K562 (cell line): ENCODE measurements at regions of chr20 and their contacts with region 1.

Region 1: DNA sequence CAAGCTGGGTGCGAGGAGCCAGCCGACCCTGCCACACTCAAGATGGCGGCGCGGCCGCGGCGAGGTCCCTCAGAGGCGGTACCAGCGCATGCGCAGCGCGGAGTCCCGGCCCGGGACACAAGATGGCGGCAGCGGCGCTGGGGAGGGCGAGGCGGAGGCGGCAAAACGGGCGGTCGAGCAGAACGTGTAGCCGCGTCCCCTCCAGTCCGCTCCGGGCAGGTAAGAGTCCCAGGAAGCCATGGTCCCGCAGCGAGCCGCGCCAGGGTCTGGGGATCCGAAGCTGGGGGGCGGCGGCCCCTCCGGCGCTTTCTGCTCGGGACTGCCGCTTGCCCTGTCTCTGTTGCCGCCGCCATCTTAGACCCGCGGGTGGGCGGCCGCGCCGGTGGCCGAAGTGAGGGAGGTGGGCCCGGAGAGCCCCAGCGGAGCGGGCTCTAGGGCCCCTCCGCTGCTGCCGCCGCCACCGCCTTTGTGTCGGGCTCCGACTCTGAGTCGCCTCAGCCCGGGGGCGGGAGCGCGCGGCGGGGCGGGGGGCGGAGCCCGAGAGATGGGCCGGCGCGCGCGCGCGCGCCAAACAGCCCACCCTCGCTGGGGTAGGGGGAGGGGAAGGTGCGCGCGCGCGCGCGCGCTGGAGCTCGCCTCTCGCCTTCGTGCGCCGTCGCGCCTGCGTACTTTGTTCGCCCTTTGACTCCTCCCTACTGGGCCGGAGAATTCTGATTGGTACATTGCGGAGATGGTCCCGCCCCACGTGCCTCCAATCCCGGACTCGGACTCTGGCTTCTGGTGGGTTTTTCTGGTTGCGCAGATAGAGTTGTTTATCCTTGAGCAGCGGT is at the start of gene PCIF1:
- DNase-seq: peak; percentile 97 to 99 (median 98)
- ATAC-seq: peak; percentile 90
- H3K4me3 ChIP-seq: peak within 1 kb of the TSS; percentile 99
- H3K27ac ChIP-seq: peak within 1 kb of the TSS; percentile 100
- H3K4me1 ChIP-seq: peaks cover 12 to 28% of the 10 kb centered on the region in 2 experiments; a peak in 4 of 5 replicates
- H3K27me3 ChIP-seq: no peaks in the 10 kb centered on the region
- CTCF ChIP-seq: peak in 1 of 3 experiments; percentile 25; a peak in 1 of 6 replicates
- EP300 ChIP-seq: no peak
- POLR2A ChIP-seq: peak; percentile 99
- RAD21 ChIP-seq: no peak; a peak in 1 of 4 replicates
- polyA plus RNA-seq, gene PCIF1: 5.8 to 12.9 TPM

Region 2: GRCh38 chr20:45798935-45799642 is 135.7 kb before region 1 on chr20:
- CTCF ChIA-PET with region 1: no interaction called
- POLR2A ChIA-PET with region 1: interaction called, 4 read pairs
- in situ Hi-C with region 1: no loop called
- intact Hi-C with region 1: loop called (anchors 10 kb)
- DNase-seq: peak; percentile 45 to 81 (median 62)
- ATAC-seq: peak; percentile 98
- H3K4me3 ChIP-seq: no peak overlapping the region
- H3K27ac ChIP-seq: peak overlapping the region; percentile 47; the same call in 1 of the 3 replicates
- H3K4me1 ChIP-seq: peaks cover 0 to 6% of the 10 kb centered on the region in 2 experiments; a peak in 1 of 5 replicates
- H3K27me3 ChIP-seq: no peaks in the 10 kb centered on the region
- CTCF ChIP-seq: peak; percentile 79 to 88 (median 86)
- EP300 ChIP-seq: no peak
- POLR2A ChIP-seq: no peak
- RAD21 ChIP-seq: peak; percentile 81 to 89

Region 3: GRCh38 chr20:45910670-45911485 is 23.9 kb before region 1 on chr20:
- CTCF ChIA-PET with region 1: no interaction called
- POLR2A ChIA-PET with region 1: interaction called, 13 read pairs
- in situ Hi-C with region 1: no loop called
- intact Hi-C with region 1: loop called (anchors 1 kb)
- DNase-seq: peak; percentile 98 to 100 (median 98)
- ATAC-seq: peak; percentile 95
- H3K4me3 ChIP-seq: peak overlapping the region; percentile 48
- H3K27ac ChIP-seq: peak overlapping the region; percentile 89
- H3K4me1 ChIP-seq: peaks cover 24 to 44% of the 10 kb centered on the region in 2 experiments
- H3K27me3 ChIP-seq: no peaks in the 10 kb centered on the region
- CTCF ChIP-seq: no peak
- EP300 ChIP-seq: peak; percentile 82
- POLR2A ChIP-seq: peak; percentile 92
- RAD21 ChIP-seq: no peak

Region 4: GRCh38 chr20:45946149-45946970 is 11.6 kb after region 1 on chr20:
- CTCF ChIA-PET with region 1: no interaction called
- POLR2A ChIA-PET with region 1: interaction called, 16 read pairs
- in situ Hi-C with region 1: no loop called
- intact Hi-C with region 1: no loop called
- DNase-seq: peak in 1 of 4 experiments; percentile 48
- ATAC-seq: no peak
- H3K4me3 ChIP-seq: no peak overlapping the region
- H3K27ac ChIP-seq: peak overlapping the region; percentile 1; the same call in 1 of the 3 replicates
- H3K4me1 ChIP-seq: peaks cover 20 to 44% of the 10 kb centered on the region in 2 experiments
- H3K27me3 ChIP-seq: no peaks in the 10 kb centered on the region
- CTCF ChIP-seq: no peak
- EP300 ChIP-seq: no peak
- POLR2A ChIP-seq: no peak
- RAD21 ChIP-seq: no peak

Region 5: GRCh38 chr20:45971675-45972499 is 37.1 kb after region 1 on chr20 and contains the start of gene ZNF335:
- CTCF ChIA-PET with region 1: no interaction called
- POLR2A ChIA-PET with region 1: interaction called, 25 read pairs
- in situ Hi-C with region 1: no loop called
- intact Hi-C with region 1: no loop called
- DNase-seq: peak; percentile 98 to 99 (median 99)
- ATAC-seq: peak; percentile 82
- H3K4me3 ChIP-seq: peak within 1 kb of the TSS; percentile 82
- H3K27ac ChIP-seq: peak within 1 kb of the TSS; percentile 100
- H3K4me1 ChIP-seq: peaks cover 9 to 36% of the 10 kb centered on the region in 2 experiments; a peak in 4 of 5 replicates
- H3K27me3 ChIP-seq: no peaks in the 10 kb centered on the region
- CTCF ChIP-seq: peak in 1 of 3 experiments; percentile 26; a peak in 2 of 6 replicates
- EP300 ChIP-seq: peak; percentile 12; the same call in 1 of the 2 replicates
- POLR2A ChIP-seq: peak; percentile 71; the same call in 1 of the 2 replicates
- RAD21 ChIP-seq: no peak; a peak in 1 of 4 replicates
- polyA plus RNA-seq, gene ZNF335: 0.39 to 0.50 TPM